B cell (primary cell): ENCODE measurements at regions of chr19 and their contacts with region 1.

Region 1: DNA sequence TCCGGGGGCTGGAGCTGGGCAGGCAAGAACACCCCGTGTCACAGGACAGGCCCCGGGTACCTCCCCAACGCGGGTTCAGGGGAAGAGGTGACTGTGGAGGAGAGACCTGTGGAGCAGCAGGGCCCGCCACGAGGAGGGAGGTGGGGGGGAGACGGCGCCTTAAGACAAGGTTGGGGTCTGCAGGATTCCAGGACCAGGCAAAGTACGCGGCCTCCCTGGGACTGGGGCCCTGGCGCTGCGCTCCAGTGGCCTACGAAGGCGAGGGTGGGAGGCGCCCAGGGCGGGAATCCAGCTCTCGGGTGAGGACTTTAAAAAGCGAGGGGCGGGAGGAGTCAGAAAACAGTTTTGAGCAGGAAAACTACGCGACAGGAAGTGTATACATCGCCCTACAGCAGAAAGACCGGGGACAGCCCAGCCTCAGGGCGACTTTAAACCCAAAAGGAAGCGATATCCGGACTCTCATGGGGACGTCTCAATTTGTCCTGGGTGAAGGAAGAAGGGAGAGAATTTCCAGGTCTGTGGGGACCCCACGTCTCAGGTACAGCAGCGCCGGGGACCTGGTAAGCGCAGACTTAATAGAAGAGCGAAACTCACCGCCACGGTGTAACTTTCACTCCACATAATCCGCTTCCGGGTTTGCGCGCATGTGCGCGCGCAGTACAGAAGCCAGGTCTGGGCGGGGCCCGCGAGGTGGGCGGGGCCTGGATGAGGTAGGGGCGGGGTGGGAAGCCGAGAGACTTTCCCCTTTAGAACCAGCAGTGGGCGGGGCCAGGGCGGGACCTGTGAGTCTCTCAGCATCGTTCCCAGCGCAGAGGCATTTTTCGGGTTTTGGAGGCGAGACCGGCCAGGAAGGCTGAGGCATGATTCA is at the start of gene ZNF83:
- DNase-seq: peak; percentile 97
- ATAC-seq: peak; percentile 96
- H3K4me3 ChIP-seq: peak within 1 kb of the TSS; percentile 72 to 95 (median 89)
- H3K4me3 Mint-ChIP-seq: peak within 1 kb of the TSS; percentile 94
- H3K27ac ChIP-seq: peak within 1 kb of the TSS; percentile 81 to 91
- H3K27ac Mint-ChIP-seq: peak within 1 kb of the TSS; percentile 95
- H3K4me1 ChIP-seq: peaks cover 9 to 18% of the 10 kb centered on the region in 2 donors
- H3K4me1 Mint-ChIP-seq: peaks cover 17% of the 10 kb centered on the region
- H3K27me3 ChIP-seq: no peaks in the 10 kb centered on the region
- H3K27me3 Mint-ChIP-seq: no peaks in the 10 kb centered on the region
- CTCF ChIP-seq: no peak
- total RNA-seq, gene ZNF83: 92.3 and 93.3 TPM in 2 replicates

Region 2: GRCh38 chr19:52269338-52270261 is 368.4 kb before region 1 on chr19 and contains the start of gene ZNF766:
- CTCF ChIA-PET with region 1: no interaction called
- POLR2A ChIA-PET with region 1: no interaction called
- intact Hi-C with region 1: loop called (anchors 1 kb)
- DNase-seq: peak; percentile 96
- ATAC-seq: peak; percentile 99
- H3K4me3 ChIP-seq: peak within 1 kb of the TSS; percentile 83 to 100 (median 96)
- H3K4me3 Mint-ChIP-seq: peak within 1 kb of the TSS; percentile 95
- H3K27ac ChIP-seq: peak within 1 kb of the TSS; percentile 87 to 97
- H3K27ac Mint-ChIP-seq: peak within 1 kb of the TSS; percentile 96
- H3K4me1 ChIP-seq: peaks cover 12 to 21% of the 10 kb centered on the region in 2 donors
- H3K4me1 Mint-ChIP-seq: peaks cover 40% of the 10 kb centered on the region
- H3K27me3 ChIP-seq: no peaks in the 10 kb centered on the region
- H3K27me3 Mint-ChIP-seq: no peaks in the 10 kb centered on the region
- CTCF ChIP-seq: no peak
- total RNA-seq, gene ZNF766: 41.1 and 48.3 TPM in 2 replicates

Region 3: GRCh38 chr19:52527134-52527955 is 110.6 kb before region 1 on chr19 and contains the start of gene ZNF808:
- CTCF ChIA-PET with region 1: no interaction called
- POLR2A ChIA-PET with region 1: interaction called, 3 read pairs
- intact Hi-C with region 1: loop called (anchors 1 kb)
- DNase-seq: peak; percentile 94
- ATAC-seq: peak; percentile 92
- H3K4me3 ChIP-seq: peak within 1 kb of the TSS; percentile 60 to 97 (median 89)
- H3K4me3 Mint-ChIP-seq: peak within 1 kb of the TSS; percentile 96
- H3K27ac ChIP-seq: peak within 1 kb of the TSS; percentile 88 to 94
- H3K27ac Mint-ChIP-seq: peak within 1 kb of the TSS; percentile 96
- H3K4me1 ChIP-seq: peaks cover 9 to 19% of the 10 kb centered on the region in 2 donors
- H3K4me1 Mint-ChIP-seq: peaks cover 26% of the 10 kb centered on the region
- H3K27me3 ChIP-seq: no peaks in the 10 kb centered on the region
- H3K27me3 Mint-ChIP-seq: no peaks in the 10 kb centered on the region
- CTCF ChIP-seq: peak; percentile 64
- total RNA-seq, gene ZNF808: 54.8 and 56.0 TPM in 2 replicates

Region 4: GRCh38 chr19:52570000-52570861 is 67.7 kb before region 1 on chr19 and contains the start of gene ZNF701:
- CTCF ChIA-PET with region 1: no interaction called
- POLR2A ChIA-PET with region 1: no interaction called
- intact Hi-C with region 1: loop called (anchors 1 kb)
- DNase-seq: peak; percentile 96
- ATAC-seq: peak; percentile 99
- H3K4me3 ChIP-seq: peak within 1 kb of the TSS; percentile 84 to 98 (median 98)
- H3K4me3 Mint-ChIP-seq: peak within 1 kb of the TSS; percentile 87
- H3K27ac ChIP-seq: peak within 1 kb of the TSS; percentile 77 to 87
- H3K27ac Mint-ChIP-seq: peak within 1 kb of the TSS; percentile 82
- H3K4me1 ChIP-seq: peaks cover 11 to 14% of the 10 kb centered on the region in 2 donors
- H3K4me1 Mint-ChIP-seq: peaks cover 33% of the 10 kb centered on the region
- H3K27me3 ChIP-seq: no peaks in the 10 kb centered on the region
- H3K27me3 Mint-ChIP-seq: no peaks in the 10 kb centered on the region
- CTCF ChIP-seq: peak; percentile 45
- total RNA-seq, gene ZNF701: 48.8 and 49.2 TPM in 2 replicates

Region 5: DNA sequence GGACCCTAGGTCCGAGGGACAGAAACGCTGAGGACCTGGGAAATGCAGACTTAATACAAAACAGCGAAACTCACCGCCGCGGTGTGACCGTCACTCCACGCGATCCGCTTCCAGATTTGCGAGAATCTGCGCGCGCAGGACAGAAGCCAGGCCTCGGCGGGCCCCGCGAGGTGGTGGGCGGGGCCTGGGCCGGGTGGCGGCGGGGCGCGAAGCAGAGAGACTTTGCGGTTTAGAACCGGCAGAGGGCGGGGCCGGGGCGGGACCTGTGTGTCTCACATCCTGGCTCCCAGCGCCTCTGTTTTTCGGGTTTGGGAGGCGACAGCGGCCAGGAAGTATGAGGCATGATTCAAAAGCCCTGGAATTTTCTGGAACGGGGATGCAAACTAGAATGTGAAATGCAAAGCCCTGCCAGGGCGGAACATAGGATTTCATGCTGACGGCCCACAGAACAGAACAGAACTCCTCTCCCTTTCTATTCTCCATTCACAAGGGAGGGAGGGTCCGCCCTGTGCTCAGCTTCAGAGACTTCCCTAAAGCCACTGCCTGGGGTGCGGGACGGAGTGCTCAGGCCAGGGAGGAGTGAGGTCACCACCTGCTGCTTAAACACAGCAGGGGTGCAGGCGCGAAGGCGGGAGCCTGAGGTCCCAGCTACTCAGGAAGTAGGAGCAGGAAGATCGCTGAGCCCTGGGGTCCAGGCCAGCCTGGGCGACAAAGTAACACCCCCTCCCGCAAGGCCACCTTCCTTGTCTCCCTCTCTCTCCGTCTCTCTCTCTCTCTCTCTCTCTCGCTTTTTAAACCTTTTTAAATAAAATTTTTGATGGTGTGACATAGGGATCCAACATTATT is 52.6 kb after region 1 on chr19:
- CTCF ChIA-PET with region 1: no interaction called
- POLR2A ChIA-PET with region 1: interaction called, 4 read pairs
- intact Hi-C with region 1: loop called (anchors 2 kb)
- DNase-seq: peak; percentile 92
- ATAC-seq: peak; percentile 97
- H3K4me3 ChIP-seq: peak overlapping the region; percentile 76 to 91 (median 80)
- H3K4me3 Mint-ChIP-seq: peak overlapping the region; percentile 97
- H3K27ac ChIP-seq: peak overlapping the region; percentile 55 to 72
- H3K27ac Mint-ChIP-seq: peak overlapping the region; percentile 87
- H3K4me1 ChIP-seq: peaks cover 12 to 15% of the 10 kb centered on the region in 2 donors
- H3K4me1 Mint-ChIP-seq: peaks cover 26% of the 10 kb centered on the region
- H3K27me3 ChIP-seq: no peaks in the 10 kb centered on the region
- H3K27me3 Mint-ChIP-seq: no peaks in the 10 kb centered on the region
- CTCF ChIP-seq: no peak

Region 6: DNA sequence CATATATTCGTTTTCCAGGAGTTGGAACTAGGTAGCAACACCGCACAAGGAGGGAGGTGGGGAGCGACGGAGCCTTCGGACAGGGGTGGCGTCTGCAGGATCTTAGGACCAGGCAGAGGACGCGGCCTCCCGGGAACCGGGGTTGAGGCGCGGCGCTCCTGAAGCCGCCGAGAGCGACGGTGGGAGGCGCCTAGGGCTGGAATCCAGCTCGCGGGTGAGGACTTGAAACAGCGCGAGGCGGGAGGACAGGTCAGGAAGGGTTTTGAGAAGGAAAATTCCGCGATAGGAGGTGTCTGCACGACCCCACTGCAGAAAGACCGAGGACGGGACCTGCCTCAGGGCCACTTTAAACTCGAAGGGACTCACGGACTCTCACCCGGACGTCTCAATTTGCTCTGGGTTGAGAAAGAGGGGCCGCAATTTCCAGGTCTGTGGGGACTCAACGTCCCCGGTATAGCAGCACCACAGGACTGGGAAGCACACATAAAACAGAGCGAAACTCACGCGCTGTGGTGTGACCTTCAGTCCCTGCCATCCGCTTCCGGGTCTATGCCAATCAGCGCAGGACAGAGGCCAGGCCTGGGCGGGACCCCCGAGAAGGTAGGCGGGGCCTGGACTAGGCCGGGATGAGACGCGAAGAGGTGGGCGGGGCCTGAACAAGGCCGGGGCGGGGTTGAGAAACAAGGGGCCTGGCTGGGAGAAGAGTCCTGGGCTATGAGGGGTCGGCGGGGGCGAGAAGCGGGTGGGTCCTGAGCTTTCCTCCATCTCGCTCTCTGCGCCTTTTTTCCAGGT is 259.4 kb after region 1 on chr19 and contains the start of gene ZNF320:
- CTCF ChIA-PET with region 1: no interaction called
- POLR2A ChIA-PET with region 1: no interaction called
- intact Hi-C with region 1: loop called (anchors 1 kb)
- DNase-seq: peak; percentile 95
- ATAC-seq: peak; percentile 100
- H3K4me3 ChIP-seq: peak within 1 kb of the TSS; percentile 85 to 98 (median 98)
- H3K4me3 Mint-ChIP-seq: peak within 1 kb of the TSS; percentile 96
- H3K27ac ChIP-seq: peak within 1 kb of the TSS; percentile 66 to 83
- H3K27ac Mint-ChIP-seq: peak within 1 kb of the TSS; percentile 94
- H3K4me1 ChIP-seq: peaks cover 5 to 17% of the 10 kb centered on the region in 2 donors
- H3K4me1 Mint-ChIP-seq: peaks cover 20% of the 10 kb centered on the region
- H3K27me3 ChIP-seq: no peaks in the 10 kb centered on the region
- H3K27me3 Mint-ChIP-seq: no peaks in the 10 kb centered on the region
- CTCF ChIP-seq: no peak
- total RNA-seq, gene ZNF320: 33.1 and 36.0 TPM in 2 replicates

Region 7: GRCh38 chr19:52962394-52963246 is 324.7 kb after region 1 on chr19 and contains the start of gene ZNF816:
- CTCF ChIA-PET with region 1: no interaction called
- POLR2A ChIA-PET with region 1: no interaction called
- intact Hi-C with region 1: loop called (anchors 1 kb)
- DNase-seq: peak; percentile 96
- ATAC-seq: peak; percentile 100
- H3K4me3 ChIP-seq: peak within 1 kb of the TSS; percentile 72 to 92 (median 80)
- H3K4me3 Mint-ChIP-seq: peak within 1 kb of the TSS; percentile 92
- H3K27ac ChIP-seq: peak within 1 kb of the TSS; percentile 50 to 69
- H3K27ac Mint-ChIP-seq: peak within 1 kb of the TSS; percentile 92
- H3K4me1 ChIP-seq: peaks cover 14 to 19% of the 10 kb centered on the region in 2 donors
- H3K4me1 Mint-ChIP-seq: peaks cover 32% of the 10 kb centered on the region
- H3K27me3 ChIP-seq: no peaks in the 10 kb centered on the region
- H3K27me3 Mint-ChIP-seq: no peaks in the 10 kb centered on the region
- CTCF ChIP-seq: no peak
- total RNA-seq, gene ZNF816: 22.3 and 25.0 TPM in 2 replicates